ENCODE measurements at regions of chr4 and their contacts with region 1.

Region 1: GRCh38 chr4:1309261-1310010 is 19.7 kb downstream of the MAEA start:
- DNase-seq: peak; percentile 91
- ATAC-seq: peak; percentile 95
- H3K4me3 ChIP-seq: peak overlapping the region; percentile 57 to 78 (median 73); a peak in 5 of 6 replicates
- H3K27ac ChIP-seq: peak overlapping the region; percentile 75
- H3K4me1 ChIP-seq: peaks cover 72% of the 10 kb centered on the region
- H3K27me3 ChIP-seq: no peaks in the 10 kb centered on the region
- CTCF ChIP-seq: no peak
- EP300 ChIP-seq: no peak
- POLR2A ChIP-seq: peak in 1 of 2 experiments; percentile 33; a peak in 1 of 4 replicates
- RAD21 ChIP-seq: peak; percentile 36; the same call in 1 of the 2 replicates

Region 2: DNA sequence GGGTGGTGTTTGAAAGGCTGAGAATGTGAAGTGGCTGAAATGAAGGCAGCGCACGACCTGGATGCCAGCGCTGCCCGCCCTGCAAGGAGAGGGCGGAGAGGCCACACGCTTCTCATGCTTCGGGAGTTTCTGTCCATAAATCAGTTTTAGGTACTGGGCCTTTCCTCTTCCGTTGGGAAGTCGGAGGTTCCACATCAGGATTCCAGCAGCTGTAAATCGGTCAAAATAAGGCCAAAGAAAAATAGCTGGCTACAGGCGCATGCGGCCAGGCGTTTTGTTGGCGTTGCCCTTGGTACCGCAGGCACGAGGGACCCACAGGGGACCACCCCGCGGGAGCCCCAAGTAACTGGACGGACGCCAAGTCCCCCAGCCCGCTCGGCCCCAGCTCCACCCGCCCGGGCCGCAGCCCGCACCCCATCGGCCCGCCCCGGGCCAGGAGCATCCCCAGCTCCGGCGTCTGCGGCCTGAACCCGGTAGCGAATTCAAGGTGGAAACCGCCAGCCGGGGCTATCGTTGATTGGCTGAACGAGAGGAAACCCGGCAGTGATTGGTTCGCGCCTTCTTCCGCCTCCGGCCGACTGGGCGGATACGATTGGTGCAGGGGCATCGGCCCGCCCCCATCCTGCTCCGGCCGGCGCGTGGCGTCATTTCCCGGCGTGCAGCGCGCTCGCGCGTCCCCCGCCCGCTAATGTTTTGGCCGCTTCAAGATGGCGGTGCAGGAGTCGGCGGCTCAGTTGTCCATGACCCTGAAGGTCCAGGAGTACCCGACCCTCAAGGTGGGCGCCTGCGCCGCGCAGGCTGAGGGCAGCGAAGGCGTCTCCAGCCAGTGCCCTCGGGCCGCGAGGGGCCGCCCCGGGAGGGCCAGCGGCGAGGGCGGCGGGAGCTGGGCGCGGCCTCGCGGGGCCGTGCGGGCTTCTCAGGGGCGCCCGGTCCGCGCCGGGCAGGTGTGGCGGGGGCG is 19.9 kb before region 1 on chr4 and contains the start of gene MAEA:
- CTCF ChIA-PET with region 1: no interaction called
- POLR2A ChIA-PET with region 1: interaction called, 29 read pairs
- in situ Hi-C with region 1: no loop called
- intact Hi-C with region 1: loop called (anchors 2 kb)
- DNase-seq: peak; percentile 92
- ATAC-seq: peak; percentile 90
- H3K4me3 ChIP-seq: peak within 1 kb of the TSS; percentile 81 to 94 (median 84)
- H3K27ac ChIP-seq: peak within 1 kb of the TSS; percentile 72
- H3K4me1 ChIP-seq: peaks cover 50% of the 10 kb centered on the region
- H3K27me3 ChIP-seq: no peaks in the 10 kb centered on the region; a peak in 1 of 5 replicates
- CTCF ChIP-seq: no peak
- EP300 ChIP-seq: 0 out of 4 replicates have a peak, but pooled peaks of 1 of the 2 experiments have one; percentile 16
- POLR2A ChIP-seq: peak; percentile 69 to 76
- RAD21 ChIP-seq: no peak
- total RNA-seq, gene MAEA: 52.0 and 65.2 TPM in 2 replicates

Measured in HepG2 (cell line).